HepG2 (cell line): ENCODE measurements at regions of chr11 and their contacts with region 1.

Region 1: DNA sequence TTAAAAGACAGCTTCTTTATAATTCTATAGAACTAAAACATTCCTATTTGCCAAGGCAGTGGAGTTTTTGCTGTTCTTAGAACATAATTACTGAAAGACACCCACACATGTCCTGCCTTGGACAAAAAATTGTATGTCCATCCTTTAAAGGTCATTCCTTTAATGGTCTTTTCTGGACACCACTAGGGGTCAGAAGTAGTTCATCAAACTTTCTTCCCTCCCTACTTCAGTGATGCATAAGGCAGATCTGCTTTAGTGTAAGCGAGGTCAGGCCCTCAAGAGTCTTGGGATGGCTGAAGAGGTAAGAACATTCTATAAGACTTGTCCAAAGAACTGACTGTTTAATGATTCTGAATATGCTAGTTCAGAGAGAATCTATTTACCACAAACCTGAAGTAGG is 4.3 kb upstream of the OR51V1 start:
- DNase-seq: peak; percentile 50
- ATAC-seq: peak; percentile 73
- H3K4me3 ChIP-seq: no peak overlapping the region
- H3K27ac ChIP-seq: no peak overlapping the region
- H3K4me1 ChIP-seq: no peaks in the 10 kb centered on the region
- H3K27me3 ChIP-seq: no peaks in the 10 kb centered on the region; a peak in 1 of 5 replicates
- CTCF ChIP-seq: peak; percentile 68
- EP300 ChIP-seq: no peak
- POLR2A ChIP-seq: no peak
- RAD21 ChIP-seq: 0 out of 2 replicates have a peak, but pooled peaks have one; percentile 14

Region 2: GRCh38 chr11:5291207-5291838 is 86.5 kb after region 1 on chr11:
- CTCF ChIA-PET with region 1: no interaction called
- POLR2A ChIA-PET with region 1: no interaction called
- in situ Hi-C with region 1: no loop called
- intact Hi-C with region 1: loop called (anchors 1 kb)
- DNase-seq: peak; percentile 7
- ATAC-seq: peak; percentile 71
- H3K4me3 ChIP-seq: no peak overlapping the region
- H3K27ac ChIP-seq: no peak overlapping the region
- H3K4me1 ChIP-seq: no peaks in the 10 kb centered on the region
- H3K27me3 ChIP-seq: no peaks in the 10 kb centered on the region
- CTCF ChIP-seq: peak; percentile 31
- EP300 ChIP-seq: no peak
- POLR2A ChIP-seq: no peak
- RAD21 ChIP-seq: no peak

Region 3: DNA sequence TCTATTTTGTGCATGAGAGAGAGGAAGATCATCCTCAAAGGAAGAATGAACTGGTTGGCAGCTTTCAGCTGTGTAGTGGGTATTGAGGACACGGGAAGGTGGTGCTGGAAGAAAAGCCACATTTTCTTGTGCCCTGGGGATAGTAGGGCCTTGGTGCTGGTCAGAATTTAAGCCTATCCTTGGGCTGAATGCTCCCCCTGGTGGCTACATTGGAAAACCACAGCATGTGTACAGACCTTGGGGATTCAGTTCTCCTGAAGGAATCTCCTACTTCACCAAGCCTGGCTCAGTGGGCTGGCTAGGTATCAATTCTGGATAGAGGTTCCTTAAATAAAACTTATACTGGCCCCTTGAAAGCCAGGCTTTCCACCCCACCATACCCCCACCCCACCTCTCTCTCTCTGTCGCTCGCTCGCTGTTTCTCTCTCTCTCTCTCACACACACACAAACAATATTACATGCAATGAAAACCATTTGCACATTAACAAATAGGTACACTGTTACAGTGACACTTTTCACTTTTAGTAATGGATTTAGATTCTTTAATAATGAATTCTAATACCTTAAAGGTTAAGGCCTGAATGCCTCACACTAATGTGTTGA is 176.1 kb after region 1 on chr11:
- CTCF ChIA-PET with region 1: interaction called, 21 read pairs
- POLR2A ChIA-PET with region 1: no interaction called
- in situ Hi-C with region 1: loop called (anchors 5 kb)
- intact Hi-C with region 1: loop called (anchors 1 kb)
- DNase-seq: peak; percentile 52
- ATAC-seq: peak; percentile 95
- H3K4me3 ChIP-seq: no peak overlapping the region
- H3K27ac ChIP-seq: no peak overlapping the region
- H3K4me1 ChIP-seq: no peaks in the 10 kb centered on the region
- H3K27me3 ChIP-seq: no peaks in the 10 kb centered on the region
- CTCF ChIP-seq: peak; percentile 80
- EP300 ChIP-seq: no peak
- POLR2A ChIP-seq: no peak
- RAD21 ChIP-seq: peak; percentile 44; the same call in 1 of the 2 replicates